ENCODE measurements at regions of chr1 and their contacts with region 1.

Region 1: DNA sequence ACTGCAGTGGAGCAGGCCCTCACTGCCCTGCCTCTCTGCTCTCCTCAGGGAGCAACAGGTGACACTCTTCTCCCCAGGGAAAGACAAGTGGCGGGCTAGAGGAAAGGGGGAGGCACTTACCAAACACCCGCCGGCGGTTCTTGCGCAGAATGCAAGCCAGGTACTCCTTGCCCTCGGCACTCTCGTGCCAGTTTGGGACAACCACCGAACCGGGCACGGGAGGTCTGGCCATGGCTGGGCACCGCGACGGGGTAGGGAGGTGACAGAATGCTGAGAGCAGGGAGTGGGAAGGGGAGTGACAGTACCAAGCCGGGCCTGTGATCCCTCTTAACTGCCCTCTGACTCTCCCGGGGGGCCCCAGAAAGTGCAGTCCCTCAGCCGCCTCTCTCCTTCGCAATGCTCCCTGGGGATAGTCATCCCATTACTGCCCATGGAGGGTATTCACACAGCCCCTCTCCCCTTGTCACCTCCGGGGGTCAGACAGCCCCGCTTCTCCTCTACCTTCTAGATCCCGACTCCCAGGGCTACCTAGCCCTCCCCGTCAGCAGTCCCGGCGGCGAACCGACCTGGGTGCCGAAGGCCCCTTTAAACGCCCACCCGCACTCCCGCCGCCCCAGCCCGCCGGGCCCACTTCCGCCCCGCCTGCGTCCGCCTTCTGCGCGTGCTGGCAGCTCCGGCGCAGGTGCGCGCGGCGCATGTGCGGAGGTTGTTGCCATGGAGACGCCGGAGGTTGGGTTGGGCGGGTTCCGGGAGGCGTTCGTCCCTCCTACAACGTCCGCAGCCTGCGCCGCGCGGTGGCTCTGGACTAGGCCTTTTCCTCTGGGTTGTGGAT is at the start of gene CPLANE2:
- DNase-seq: peak; percentile 96
- H3K4me3 ChIP-seq: peak within 1 kb of the TSS; percentile 80
- H3K27ac ChIP-seq: peak within 1 kb of the TSS; percentile 60
- H3K4me1 ChIP-seq: peaks cover 16% of the 10 kb centered on the region
- CTCF ChIP-seq: no peak; the same call in 1 of the 2 replicates
- total RNA-seq, gene CPLANE2: 7.9 and 11.6 TPM in 2 replicates

Region 2: DNA sequence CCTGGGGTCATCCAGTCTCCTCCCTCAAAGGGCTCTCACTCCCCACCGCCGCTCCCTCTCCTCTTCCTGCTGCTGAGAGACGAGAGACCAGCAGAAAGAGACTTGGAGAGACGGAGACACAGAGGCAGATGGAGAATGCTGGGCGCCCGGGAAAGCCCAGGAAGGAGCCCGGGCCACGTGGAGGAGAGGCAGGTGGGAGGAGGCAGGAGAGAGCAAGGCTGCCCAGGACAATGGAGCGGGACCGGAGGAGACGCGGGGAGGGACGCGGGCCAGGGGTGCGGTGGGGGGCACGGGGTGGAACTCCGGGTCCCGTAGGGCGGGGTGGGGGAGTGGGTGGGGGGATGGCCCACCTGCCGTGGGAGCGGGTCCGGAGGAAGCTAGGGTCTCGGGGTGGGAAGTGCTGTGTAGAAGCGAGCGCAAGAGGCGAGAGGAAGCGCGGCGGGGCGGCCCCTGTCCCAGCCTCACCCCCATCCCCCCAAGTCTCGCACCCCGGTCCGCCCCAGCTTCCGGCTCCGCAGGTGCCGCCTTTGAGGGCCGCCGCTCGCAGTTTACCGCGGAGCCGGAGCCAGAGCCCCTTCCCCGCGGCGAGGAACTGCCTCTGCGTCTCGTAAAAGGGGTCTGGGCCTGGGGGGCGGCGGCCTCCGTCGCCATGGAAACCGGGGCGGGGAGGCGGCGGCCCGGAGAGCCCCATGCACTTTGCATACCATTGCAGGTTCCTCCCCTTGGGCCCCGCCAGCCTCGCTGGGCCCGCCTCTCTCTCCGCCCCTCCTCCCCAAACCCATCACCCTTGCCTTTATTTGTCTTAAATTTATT is 69.2 kb before region 1 on chr1:
- CTCF ChIA-PET with region 1: no interaction called
- POLR2A ChIA-PET with region 1: no interaction called
- intact Hi-C with region 1: no loop called
- DNase-seq: peak; percentile 73
- H3K4me3 ChIP-seq: peak overlapping the region; percentile 67
- H3K27ac ChIP-seq: no peak overlapping the region
- H3K4me1 ChIP-seq: peaks cover 26% of the 10 kb centered on the region
- CTCF ChIP-seq: no peak

Region 3: DNA sequence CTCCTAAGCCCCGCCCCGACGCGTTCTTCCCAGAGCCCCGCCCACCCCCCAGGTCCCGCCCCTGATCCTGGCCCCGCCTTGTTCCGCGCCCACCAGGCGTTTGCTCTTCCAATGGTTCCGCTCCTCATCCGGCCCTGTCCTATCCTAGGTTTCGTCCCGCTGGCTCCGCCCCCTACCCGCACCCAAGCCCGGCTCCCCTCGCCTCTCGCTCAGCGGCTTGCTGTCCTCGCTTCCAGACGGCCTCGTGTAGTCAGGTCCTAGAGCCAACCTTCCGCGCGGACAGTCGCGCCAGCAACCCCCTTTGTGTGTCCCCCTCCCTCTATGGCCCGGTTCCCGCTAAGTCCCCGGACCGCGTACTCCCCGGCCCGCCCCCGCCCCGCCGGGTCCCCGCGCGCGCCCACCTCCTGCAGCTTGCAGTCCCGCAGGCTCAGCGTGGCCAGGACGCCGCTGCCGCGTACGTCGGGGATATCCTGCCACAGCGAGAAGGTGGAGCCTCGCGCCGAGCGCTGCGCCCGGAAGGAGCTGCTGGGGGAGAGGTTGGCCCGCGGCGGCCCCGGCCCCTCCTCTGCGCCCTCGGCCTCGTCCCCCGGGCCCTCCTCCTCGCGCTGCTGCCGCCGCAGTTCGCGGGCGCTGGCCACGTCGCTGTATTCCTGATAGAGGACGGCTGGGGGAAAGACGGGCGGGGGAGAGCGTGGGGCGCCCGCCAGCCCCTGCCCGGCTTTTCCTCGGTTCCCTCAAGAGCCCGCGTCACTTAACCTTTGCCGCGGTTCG is 30.0 kb before region 1 on chr1:
- CTCF ChIA-PET with region 1: no interaction called
- POLR2A ChIA-PET with region 1: interaction called, 3 read pairs
- intact Hi-C with region 1: loop called (anchors 2 kb)
- DNase-seq: peak; percentile 95
- H3K4me3 ChIP-seq: peak overlapping the region; percentile 75
- H3K27ac ChIP-seq: peak overlapping the region; percentile 65
- H3K4me1 ChIP-seq: peaks cover 6% of the 10 kb centered on the region
- CTCF ChIP-seq: no peak

Region 4: DNA sequence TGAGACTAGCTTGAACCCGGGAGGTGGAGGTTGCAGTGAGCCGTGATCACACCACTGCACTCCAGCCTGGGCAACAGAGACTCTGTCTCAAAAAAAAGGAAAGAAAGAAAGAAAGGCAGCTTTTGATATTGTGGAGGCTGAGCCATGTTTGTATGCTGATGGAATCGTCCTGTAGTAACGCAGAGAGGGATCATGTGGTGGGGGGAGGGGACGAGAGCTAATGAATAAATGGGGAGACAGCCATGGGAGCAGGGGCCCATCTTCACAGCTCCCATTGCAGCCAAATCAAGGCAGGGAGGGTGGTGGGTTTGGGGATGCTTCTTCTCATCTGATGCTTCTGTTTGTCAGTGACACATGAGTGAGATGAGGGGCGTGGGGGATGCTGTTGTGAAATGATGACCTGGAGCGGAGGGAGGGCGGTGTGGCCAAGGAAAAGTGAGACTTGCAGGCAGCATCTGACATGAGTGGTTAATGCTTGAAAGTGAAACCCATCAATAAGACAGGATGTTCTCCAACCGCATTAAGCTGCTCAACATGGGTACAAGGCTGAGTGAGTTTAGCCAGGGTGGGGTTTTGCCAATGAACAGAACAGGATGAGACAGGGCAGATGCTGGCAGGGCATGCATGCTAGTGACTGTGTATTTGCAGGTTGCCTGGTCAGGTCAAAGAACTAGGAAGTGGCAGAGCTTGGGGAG is 183.8 kb after region 1 on chr1:
- CTCF ChIA-PET with region 1: no interaction called
- POLR2A ChIA-PET with region 1: no interaction called
- intact Hi-C with region 1: no loop called
- DNase-seq: peak; percentile 87
- H3K4me3 ChIP-seq: peak overlapping the region; percentile 1
- H3K27ac ChIP-seq: peak overlapping the region; percentile 50
- H3K4me1 ChIP-seq: peaks cover 19% of the 10 kb centered on the region
- CTCF ChIP-seq: no peak